CD4-positive, alpha-beta T cell (primary cell): ENCODE measurements at regions of chr2 and their contacts with region 1.

Region 1: GRCh38 chr2:151261231-151261976 is at the start of gene RBM43:
- DNase-seq: peak; percentile 64 to 94 (median 78)
- ATAC-seq: peak; percentile 88
- H3K4me3 ChIP-seq: peak within 1 kb of the TSS; percentile 96
- H3K4me3 Mint-ChIP-seq: peak within 1 kb of the TSS; percentile 97
- H3K27ac ChIP-seq: peak within 1 kb of the TSS; percentile 96 to 98
- H3K27ac Mint-ChIP-seq: peak within 1 kb of the TSS; percentile 96
- H3K4me1 ChIP-seq: peaks cover 22% of the 10 kb centered on the region
- H3K4me1 Mint-ChIP-seq: peaks cover 39% of the 10 kb centered on the region
- H3K27me3 ChIP-seq: no peaks in the 10 kb centered on the region
- H3K27me3 Mint-ChIP-seq: no peaks in the 10 kb centered on the region
- CTCF ChIP-seq: no peak
- total RNA-seq, gene RBM43: 15.0 to 16.0 TPM

Region 2: GRCh38 chr2:151289369-151290088 is 28.1 kb after region 1 on chr2 and contains the start of gene NMI:
- CTCF ChIA-PET with region 1: interaction called, 8 read pairs
- POLR2A ChIA-PET with region 1: interaction called, 145 read pairs
- intact Hi-C with region 1: loop called (anchors 1 to 2 kb)
- DNase-seq: peak; percentile 42 to 89 (median 61)
- ATAC-seq: peak; percentile 71
- H3K4me3 ChIP-seq: peak within 1 kb of the TSS; percentile 82
- H3K4me3 Mint-ChIP-seq: peak within 1 kb of the TSS; percentile 94
- H3K27ac ChIP-seq: peak within 1 kb of the TSS; percentile 82 to 97
- H3K27ac Mint-ChIP-seq: peak within 1 kb of the TSS; percentile 96
- H3K4me1 ChIP-seq: peaks cover 23% of the 10 kb centered on the region
- H3K4me1 Mint-ChIP-seq: peaks cover 56% of the 10 kb centered on the region
- H3K27me3 ChIP-seq: no peaks in the 10 kb centered on the region
- H3K27me3 Mint-ChIP-seq: no peaks in the 10 kb centered on the region
- CTCF ChIP-seq: no peak
- total RNA-seq, gene NMI: 23.5 to 24.2 TPM